Transverse colon (tissue), 4 donors: ENCODE measurements at regions of chr20 and their contacts with region 1.

Region 1: GRCh38 chr20:44193801-44194200 is 6.8 kb upstream of the JPH2 start:
- DNase-seq: no peak
- H3K4me3 ChIP-seq: no peak overlapping the region
- H3K27ac ChIP-seq: no peak overlapping the region
- H3K4me1 ChIP-seq: peaks cover 0 to 5% (median 0%) of the 10 kb centered on the region in 4 donors
- H3K27me3 ChIP-seq: no peaks in the 10 kb centered on the region
- CTCF ChIP-seq: no peak
- EP300 ChIP-seq: no peak
- POLR2A ChIP-seq: no peak

Region 2: DNA sequence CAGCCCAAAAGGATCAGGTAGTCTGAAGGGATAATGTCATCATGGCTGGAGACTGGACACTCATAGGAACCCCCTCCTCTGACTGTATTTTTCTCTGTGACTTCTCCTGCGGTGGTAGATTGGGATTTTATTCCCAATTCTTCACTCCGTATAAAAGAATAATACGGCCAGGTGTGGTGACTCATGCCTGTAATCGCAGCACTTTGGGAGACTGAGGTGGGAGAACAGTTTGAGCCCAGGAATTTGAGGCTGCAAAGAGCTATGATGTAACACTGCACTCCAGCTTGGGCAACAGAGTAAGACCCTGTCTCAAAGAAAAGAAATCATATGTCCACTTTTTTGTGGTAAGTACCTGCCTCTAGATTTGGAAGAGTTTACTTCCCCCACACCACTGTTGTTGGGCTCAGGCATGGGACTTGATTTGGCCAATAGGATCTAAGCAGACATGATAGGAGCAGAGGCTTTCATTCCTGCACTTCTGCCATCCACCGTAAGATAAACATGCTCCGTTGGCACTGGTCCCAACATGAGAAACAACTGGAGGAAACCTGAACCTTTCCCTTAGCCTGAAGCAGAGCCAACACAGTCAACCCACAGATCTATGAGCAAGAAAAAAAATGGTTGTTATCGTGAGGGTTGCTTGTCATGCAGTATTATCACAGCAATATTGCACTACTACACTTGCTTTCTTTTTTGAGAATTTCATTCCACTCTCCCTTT is 88.8 kb before region 1 on chr20:
- in situ Hi-C with region 1: loop called in 1 of 4 experiments (anchors 5 kb)
- intact Hi-C with region 1: no loop called
- DNase-seq: no peak
- H3K4me3 ChIP-seq: no peak overlapping the region
- H3K27ac ChIP-seq: no peak overlapping the region
- H3K4me1 ChIP-seq: no peaks in the 10 kb centered on the region
- H3K27me3 ChIP-seq: peaks cover 25% of the 10 kb centered on the region
- CTCF ChIP-seq: no peak
- EP300 ChIP-seq: no peak
- POLR2A ChIP-seq: no peak